ENCODE measurements at regions of chr1 and their contacts with region 1.

Region 1: DNA sequence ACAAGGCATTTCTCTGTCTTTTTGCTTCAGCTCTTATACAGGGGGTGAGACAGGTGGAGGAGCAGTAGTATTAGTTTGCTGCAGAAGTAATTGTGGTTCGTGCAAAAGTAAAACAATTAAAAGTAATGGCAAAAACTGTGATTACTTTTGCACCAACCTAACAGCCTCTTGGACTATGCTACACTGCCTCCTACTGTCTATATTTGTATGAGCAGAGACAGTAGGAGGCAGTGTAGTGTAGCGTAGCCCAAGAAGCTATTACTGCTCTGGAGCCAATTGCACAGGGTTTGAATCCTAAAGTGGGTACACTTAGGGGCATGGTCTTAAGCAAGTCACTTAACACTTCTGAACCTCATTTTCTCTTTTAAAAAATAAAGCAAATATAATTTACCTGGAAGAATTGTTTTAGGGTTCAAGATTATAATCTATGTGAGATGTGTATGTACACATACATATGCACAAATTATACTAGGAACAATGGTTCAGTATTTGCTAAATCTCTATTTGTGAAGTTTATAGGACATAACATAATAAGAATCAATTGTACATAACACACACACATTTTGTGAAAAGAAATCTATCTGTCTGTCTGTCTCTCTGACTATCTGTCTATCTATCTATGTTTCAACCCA is 103.8 kb downstream of the BRINP3 start:
- DNase-seq: no peak
- ATAC-seq: peak; percentile 99
- H3K4me3 Mint-ChIP-seq: no peak overlapping the region
- H3K27ac Mint-ChIP-seq: no peak overlapping the region
- H3K4me1 Mint-ChIP-seq: no peaks in the 10 kb centered on the region
- H3K27me3 Mint-ChIP-seq: no peaks in the 10 kb centered on the region
- CTCF ChIP-seq: peak; percentile 50; the same call in 1 of the 2 replicates

Region 2: GRCh38 chr1:189708674-189709073 is 665.1 kb before region 1 on chr1:
- CTCF ChIA-PET with region 1: interaction called, 11 read pairs
- POLR2A ChIA-PET with region 1: no interaction called
- DNase-seq: peak; percentile 23
- ATAC-seq: peak; percentile 99
- H3K4me3 Mint-ChIP-seq: no peak overlapping the region
- H3K27ac Mint-ChIP-seq: no peak overlapping the region
- H3K4me1 Mint-ChIP-seq: no peaks in the 10 kb centered on the region
- H3K27me3 Mint-ChIP-seq: no peaks in the 10 kb centered on the region
- CTCF ChIP-seq: no peak

Region 3: DNA sequence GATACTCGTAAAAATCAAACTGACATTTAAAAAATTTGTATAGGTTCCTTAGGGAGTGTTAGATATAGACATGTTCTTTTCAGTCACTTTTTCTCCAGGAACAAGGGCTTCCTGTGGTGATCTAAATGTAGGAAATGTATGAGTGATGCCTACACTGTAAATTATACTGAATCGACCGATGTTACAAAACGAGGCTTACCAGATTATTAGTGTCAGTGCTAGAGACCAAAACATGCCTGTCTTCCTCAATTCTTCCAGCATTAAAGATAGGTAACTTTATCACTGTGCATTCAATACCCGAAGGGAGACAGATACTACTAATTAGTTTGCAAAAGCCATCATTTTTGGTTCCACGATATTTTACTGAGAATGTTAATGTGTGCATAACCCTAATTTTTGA is 17.8 kb after region 1 on chr1:
- CTCF ChIA-PET with region 1: no interaction called
- POLR2A ChIA-PET with region 1: no interaction called
- DNase-seq: no peak
- ATAC-seq: no peak
- H3K4me3 Mint-ChIP-seq: no peak overlapping the region
- H3K27ac Mint-ChIP-seq: no peak overlapping the region
- H3K4me1 Mint-ChIP-seq: no peaks in the 10 kb centered on the region
- H3K27me3 Mint-ChIP-seq: no peaks in the 10 kb centered on the region
- CTCF ChIP-seq: no peak

Measured in WTC11 (cell line).